ENCODE measurements at regions of chr5 and their contacts with region 1.

Region 1: DNA sequence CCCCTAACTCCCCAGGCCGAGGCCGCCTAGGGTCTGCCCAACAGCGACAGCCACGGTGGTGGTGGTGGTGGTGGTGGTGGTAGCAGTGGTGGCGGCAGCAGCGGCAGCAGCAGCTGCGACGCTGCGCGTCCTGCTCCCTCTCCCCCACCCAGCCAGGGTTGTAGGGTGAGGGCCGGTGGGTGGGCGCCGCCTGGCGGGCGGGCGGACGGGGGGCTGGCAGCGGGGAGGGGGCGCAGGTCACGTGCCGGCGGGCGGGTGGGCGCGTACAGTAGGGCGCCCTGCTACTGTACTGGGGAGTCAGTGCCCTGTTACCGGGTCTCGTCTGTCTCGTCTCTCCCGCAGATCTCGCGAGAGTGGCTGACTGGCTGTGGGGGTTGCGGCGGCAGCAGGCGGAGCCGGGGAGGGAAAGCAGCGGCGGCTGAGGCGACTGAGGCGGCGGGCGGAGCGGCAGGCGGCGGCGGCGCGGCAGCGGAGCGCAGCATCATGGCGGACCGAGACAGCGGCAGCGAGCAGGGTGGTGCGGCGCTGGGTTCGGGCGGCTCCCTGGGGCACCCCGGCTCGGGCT is at the start of gene PURA:
- DNase-seq: peak; percentile 94 to 98 (median 97)
- ATAC-seq: peak; percentile 93
- H3K4me3 ChIP-seq: peak within 1 kb of the TSS; percentile 77
- H3K4me3 Mint-ChIP-seq: peak within 1 kb of the TSS; percentile 86 to 97 (median 94)
- H3K27ac ChIP-seq: peak within 1 kb of the TSS; percentile 89
- H3K27ac Mint-ChIP-seq: peak within 1 kb of the TSS; percentile 88 to 99 (median 95)
- H3K4me1 ChIP-seq: peaks cover 46 to 57% of the 10 kb centered on the region in 2 donors
- H3K4me1 Mint-ChIP-seq: peaks cover 53 to 95% (median 77%) of the 10 kb centered on the region in 7 donors
- H3K27me3 ChIP-seq: peaks cover 0 to 7% of the 10 kb centered on the region in 2 donors
- H3K27me3 Mint-ChIP-seq: peaks cover 0 to 46% (median 4%) of the 10 kb centered on the region in 5 donors
- total RNA-seq, gene PURA: 11.6 to 33.5 (median 13.9) TPM

Region 2: GRCh38 chr5:139341650-139342422 is 771.9 kb before region 1 on chr5 and contains the start of gene PAIP2:
- CTCF ChIA-PET with region 1: no interaction called
- POLR2A ChIA-PET with region 1: no interaction called
- intact Hi-C with region 1: loop called (anchors 5 kb)
- DNase-seq: peak; percentile 94 to 98 (median 97)
- ATAC-seq: peak; percentile 95
- H3K4me3 ChIP-seq: peak within 1 kb of the TSS; percentile 96
- H3K4me3 Mint-ChIP-seq: peak within 1 kb of the TSS; percentile 95 to 100 (median 98)
- H3K27ac ChIP-seq: peak within 1 kb of the TSS; percentile 98
- H3K27ac Mint-ChIP-seq: peak within 1 kb of the TSS; percentile 96 to 100 (median 99)
- H3K4me1 ChIP-seq: peaks cover 28 to 30% of the 10 kb centered on the region in 2 donors
- H3K4me1 Mint-ChIP-seq: peaks cover 34 to 65% (median 55%) of the 10 kb centered on the region in 7 donors
- H3K27me3 ChIP-seq: no peaks in the 10 kb centered on the region
- H3K27me3 Mint-ChIP-seq: peaks cover 0 to 5% (median 0%) of the 10 kb centered on the region in 5 donors
- total RNA-seq, gene PAIP2: 88.8 to 121 (median 106) TPM

Region 3: GRCh38 chr5:139985733-139986132 is 128.0 kb before region 1 on chr5:
- CTCF ChIA-PET with region 1: no interaction called
- POLR2A ChIA-PET with region 1: no interaction called
- intact Hi-C with region 1: no loop called
- DNase-seq: no peak
- ATAC-seq: peak; percentile 66
- H3K4me3 ChIP-seq: no peak overlapping the region
- H3K4me3 Mint-ChIP-seq: no peak overlapping the region
- H3K27ac ChIP-seq: no peak overlapping the region
- H3K27ac Mint-ChIP-seq: peak overlapping the region in 1 of 9 donors; percentile 47
- H3K4me1 ChIP-seq: no peaks in the 10 kb centered on the region
- H3K4me1 Mint-ChIP-seq: peaks cover 0 to 7% (median 0%) of the 10 kb centered on the region in 7 donors
- H3K27me3 ChIP-seq: no peaks in the 10 kb centered on the region
- H3K27me3 Mint-ChIP-seq: peaks cover 10 to 32% (median 20%) of the 10 kb centered on the region in 5 donors

Region 4: DNA sequence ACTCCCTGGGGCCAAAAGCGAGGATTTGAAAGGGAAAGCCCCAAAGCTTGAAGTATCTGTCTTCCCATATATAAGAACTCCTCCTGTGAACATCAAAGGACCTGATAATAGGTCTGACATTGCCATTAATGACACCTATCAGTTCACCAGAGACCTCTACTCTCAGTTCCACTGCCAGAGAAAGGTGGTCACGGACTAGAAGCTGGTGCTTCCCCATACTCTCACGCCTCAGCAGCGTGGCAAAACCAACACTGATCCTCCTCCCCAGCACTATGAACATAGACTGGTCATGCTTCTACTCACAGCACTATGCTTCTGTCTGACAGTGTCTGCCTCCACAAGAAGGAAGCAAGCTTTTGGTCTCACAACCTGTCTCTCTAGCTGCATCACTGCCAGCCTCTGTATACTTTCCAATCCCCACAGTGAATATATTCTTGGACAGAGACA is 108.6 kb before region 1 on chr5:
- CTCF ChIA-PET with region 1: no interaction called
- POLR2A ChIA-PET with region 1: no interaction called
- intact Hi-C with region 1: no loop called
- DNase-seq: no peak
- ATAC-seq: no peak
- H3K4me3 ChIP-seq: no peak overlapping the region
- H3K4me3 Mint-ChIP-seq: no peak overlapping the region
- H3K27ac ChIP-seq: no peak overlapping the region
- H3K27ac Mint-ChIP-seq: no peak overlapping the region
- H3K4me1 ChIP-seq: no peaks in the 10 kb centered on the region
- H3K4me1 Mint-ChIP-seq: no peaks in the 10 kb centered on the region
- H3K27me3 ChIP-seq: peaks cover 0 to 7% of the 10 kb centered on the region in 2 donors
- H3K27me3 Mint-ChIP-seq: peaks cover 35 to 46% (median 43%) of the 10 kb centered on the region in 5 donors

Region 5: GRCh38 chr5:140101179-140101578 is 12.6 kb before region 1 on chr5:
- CTCF ChIA-PET with region 1: interaction called, 3 read pairs
- POLR2A ChIA-PET with region 1: interaction called, 60 read pairs
- intact Hi-C with region 1: loop called in 1 of 2 experiments (anchors 2 kb)
- DNase-seq: no peak
- ATAC-seq: no peak
- H3K4me3 ChIP-seq: no peak overlapping the region
- H3K4me3 Mint-ChIP-seq: no peak overlapping the region
- H3K27ac ChIP-seq: no peak overlapping the region
- H3K27ac Mint-ChIP-seq: no peak overlapping the region
- H3K4me1 ChIP-seq: no peaks in the 10 kb centered on the region
- H3K4me1 Mint-ChIP-seq: peaks cover 0 to 4% (median 2%) of the 10 kb centered on the region in 7 donors
- H3K27me3 ChIP-seq: no peaks in the 10 kb centered on the region
- H3K27me3 Mint-ChIP-seq: peaks cover 0 to 60% (median 3%) of the 10 kb centered on the region in 5 donors

Region 6: DNA sequence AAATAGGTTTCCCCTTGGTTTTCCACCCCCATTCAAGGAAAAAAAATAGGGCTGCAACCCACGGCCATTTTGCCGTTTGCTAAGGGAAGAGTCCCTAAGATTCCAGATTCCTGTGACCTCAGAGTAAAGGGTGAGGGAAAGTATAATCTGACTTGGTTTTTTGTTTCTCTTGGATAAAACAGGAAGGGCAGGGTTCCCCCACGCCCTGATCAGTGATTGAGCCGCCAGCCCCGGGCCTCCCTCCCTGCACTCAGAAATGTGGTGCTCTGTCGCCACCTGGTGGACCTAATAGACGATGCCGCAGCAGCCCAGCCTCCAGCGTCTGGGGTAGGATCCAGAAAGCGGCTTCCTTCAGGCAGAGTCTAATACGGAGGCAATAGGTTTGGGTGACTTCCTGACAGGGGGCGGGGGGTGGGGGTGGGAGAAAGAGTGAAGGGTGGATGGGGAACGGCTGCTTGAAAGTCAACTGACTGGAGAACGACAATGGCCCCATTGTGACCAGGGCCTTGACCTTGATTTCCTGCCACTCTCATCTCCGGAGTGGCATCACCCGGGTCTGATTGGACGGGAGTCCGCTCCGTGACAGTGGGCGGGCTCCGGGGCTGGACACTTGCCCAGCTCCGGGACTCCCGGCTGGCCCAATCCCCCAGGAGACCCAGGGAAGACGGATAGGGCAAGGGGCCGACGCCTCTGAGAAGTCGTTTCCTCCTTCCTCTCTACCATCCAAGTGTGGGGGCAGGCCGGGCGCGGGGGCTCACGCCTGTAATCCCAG is 43.4 kb after region 1 on chr5:
- CTCF ChIA-PET with region 1: no interaction called
- POLR2A ChIA-PET with region 1: no interaction called
- intact Hi-C with region 1: loop called (anchors 1 to 5 kb)
- DNase-seq: peak; percentile 72 to 85 (median 82)
- ATAC-seq: peak; percentile 99
- H3K4me3 ChIP-seq: no peak overlapping the region
- H3K4me3 Mint-ChIP-seq: peak overlapping the region in 9 of 10 donors; percentile 7 to 66 (median 62)
- H3K27ac ChIP-seq: no peak overlapping the region
- H3K27ac Mint-ChIP-seq: peak overlapping the region in 4 of 9 donors; percentile 5 to 51 (median 32)
- H3K4me1 ChIP-seq: peaks cover 0 to 5% of the 10 kb centered on the region in 2 donors
- H3K4me1 Mint-ChIP-seq: peaks cover 3 to 12% (median 8%) of the 10 kb centered on the region in 7 donors
- H3K27me3 ChIP-seq: no peaks in the 10 kb centered on the region
- H3K27me3 Mint-ChIP-seq: peaks cover 0 to under 1% (median 0%) of the 10 kb centered on the region in 5 donors

Region 7: GRCh38 chr5:140639148-140639979 is 525.6 kb after region 1 on chr5 and contains the start of gene TMCO6:
- CTCF ChIA-PET with region 1: no interaction called
- POLR2A ChIA-PET with region 1: no interaction called
- intact Hi-C with region 1: loop called in 1 of 2 experiments (anchors 5 kb)
- DNase-seq: peak; percentile 89 to 96 (median 94)
- ATAC-seq: peak; percentile 99
- H3K4me3 ChIP-seq: peak within 1 kb of the TSS; percentile 66
- H3K4me3 Mint-ChIP-seq: peak within 1 kb of the TSS; percentile 86 to 97 (median 93)
- H3K27ac ChIP-seq: peak within 1 kb of the TSS; percentile 79
- H3K27ac Mint-ChIP-seq: peak within 1 kb of the TSS; percentile 87 to 100 (median 93)
- H3K4me1 ChIP-seq: peaks cover 6% of the 10 kb centered on the region in 2 donors
- H3K4me1 Mint-ChIP-seq: peaks cover 21 to 54% (median 40%) of the 10 kb centered on the region in 7 donors
- H3K27me3 ChIP-seq: no peaks in the 10 kb centered on the region
- H3K27me3 Mint-ChIP-seq: no peaks in the 10 kb centered on the region
- total RNA-seq, gene TMCO6: 24.5 to 55.3 (median 36.4) TPM

Region 8: GRCh38 chr5:141618804-141619554 is 1505.2 kb after region 1 on chr5 and contains the start of gene DIAPH1:
- CTCF ChIA-PET with region 1: no interaction called
- POLR2A ChIA-PET with region 1: no interaction called
- intact Hi-C with region 1: loop called in 1 of 2 experiments (anchors 5 kb)
- DNase-seq: peak; percentile 91 to 98 (median 96)
- ATAC-seq: peak; percentile 98
- H3K4me3 ChIP-seq: peak within 1 kb of the TSS; percentile 77
- H3K4me3 Mint-ChIP-seq: peak within 1 kb of the TSS; percentile 94 to 100 (median 100)
- H3K27ac ChIP-seq: peak within 1 kb of the TSS; percentile 97
- H3K27ac Mint-ChIP-seq: peak within 1 kb of the TSS; percentile 91 to 99 (median 95)
- H3K4me1 ChIP-seq: peaks cover 11 to 22% of the 10 kb centered on the region in 2 donors
- H3K4me1 Mint-ChIP-seq: peaks cover 44 to 61% (median 56%) of the 10 kb centered on the region in 7 donors
- H3K27me3 ChIP-seq: no peaks in the 10 kb centered on the region
- H3K27me3 Mint-ChIP-seq: no peaks in the 10 kb centered on the region
- total RNA-seq, gene DIAPH1: 163 to 278 (median 173) TPM